ENCODE measurements at regions of chr12 and their contacts with region 1.

Region 1: GRCh38 chr12:94545935-94546771 is 86.5 kb upstream of the CEP83 start:
- DNase-seq: peak; percentile 18
- ATAC-seq: peak; percentile 43
- H3K4me3 ChIP-seq: no peak overlapping the region
- H3K4me3 Mint-ChIP-seq: no peak overlapping the region
- H3K27ac ChIP-seq: no peak overlapping the region
- H3K27ac Mint-ChIP-seq: no peak overlapping the region
- H3K4me1 ChIP-seq: no peaks in the 10 kb centered on the region
- H3K4me1 Mint-ChIP-seq: no peaks in the 10 kb centered on the region
- H3K27me3 ChIP-seq: no peaks in the 10 kb centered on the region
- H3K27me3 Mint-ChIP-seq: no peaks in the 10 kb centered on the region
- CTCF ChIP-seq: no peak

Region 2: DNA sequence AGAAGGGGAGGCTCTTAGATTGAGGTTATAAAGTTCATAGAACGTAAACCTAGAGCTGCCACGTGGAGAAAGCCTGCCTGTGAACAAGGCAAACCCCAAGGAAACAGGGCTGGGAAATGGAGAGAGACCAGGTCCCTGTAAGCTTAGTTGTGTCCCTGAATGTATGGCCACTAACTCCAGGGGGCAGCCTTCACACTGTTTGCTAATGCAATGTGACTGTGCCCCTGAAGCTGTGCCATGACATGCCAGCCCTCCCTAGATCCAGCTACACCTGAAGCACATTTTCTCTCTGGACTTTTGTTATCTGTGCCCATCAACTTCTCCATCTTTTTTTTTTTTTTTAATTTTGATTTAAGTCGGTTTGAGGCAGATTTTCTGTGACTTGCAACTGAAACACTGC is 164.8 kb after region 1 on chr12:
- CTCF ChIA-PET with region 1: no interaction called
- POLR2A ChIA-PET with region 1: no interaction called
- intact Hi-C with region 1: no loop called
- DNase-seq: peak; percentile 57
- ATAC-seq: peak; percentile 71
- H3K4me3 ChIP-seq: no peak overlapping the region
- H3K4me3 Mint-ChIP-seq: no peak overlapping the region
- H3K27ac ChIP-seq: no peak overlapping the region
- H3K27ac Mint-ChIP-seq: no peak overlapping the region
- H3K4me1 ChIP-seq: peaks cover 8 to 9% of the 10 kb centered on the region in 2 donors
- H3K4me1 Mint-ChIP-seq: peaks cover 21% of the 10 kb centered on the region
- H3K27me3 ChIP-seq: no peaks in the 10 kb centered on the region
- H3K27me3 Mint-ChIP-seq: no peaks in the 10 kb centered on the region
- CTCF ChIP-seq: peak; percentile 57

Region 3: DNA sequence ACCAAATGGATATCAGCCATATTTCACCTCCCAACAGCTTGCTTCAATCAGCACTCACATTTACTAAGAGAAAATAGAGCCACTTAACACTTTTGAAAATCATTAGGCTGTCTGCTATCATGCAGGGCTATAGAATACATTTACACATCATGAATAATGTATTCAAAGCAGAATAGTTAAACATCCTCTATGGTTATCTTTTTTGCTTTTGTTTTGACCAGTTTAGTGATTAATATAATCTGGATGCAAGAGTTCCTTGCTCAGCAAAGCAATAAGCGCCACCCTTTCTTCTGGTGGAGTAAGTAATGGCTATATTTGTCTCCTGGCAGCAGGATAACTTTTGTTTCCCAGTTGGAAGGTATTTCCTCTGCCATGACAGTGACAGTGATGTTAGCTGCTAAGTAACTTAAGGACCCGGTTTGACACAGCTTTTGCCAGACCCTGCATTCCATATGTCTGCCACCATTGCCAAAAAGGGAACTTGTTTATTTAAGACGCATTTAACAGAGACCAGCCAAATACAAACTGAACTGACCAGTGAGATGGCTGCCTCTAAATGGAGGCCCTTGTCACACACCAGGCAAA is 597.6 kb after region 1 on chr12:
- CTCF ChIA-PET with region 1: no interaction called
- POLR2A ChIA-PET with region 1: interaction called, 10 read pairs
- intact Hi-C with region 1: no loop called
- DNase-seq: no peak
- ATAC-seq: no peak
- H3K4me3 ChIP-seq: no peak overlapping the region
- H3K4me3 Mint-ChIP-seq: no peak overlapping the region
- H3K27ac ChIP-seq: no peak overlapping the region
- H3K27ac Mint-ChIP-seq: no peak overlapping the region
- H3K4me1 ChIP-seq: no peaks in the 10 kb centered on the region
- H3K4me1 Mint-ChIP-seq: no peaks in the 10 kb centered on the region
- H3K27me3 ChIP-seq: no peaks in the 10 kb centered on the region
- H3K27me3 Mint-ChIP-seq: no peaks in the 10 kb centered on the region
- CTCF ChIP-seq: no peak

Measured in B cell (primary cell).